Ovary (tissue), 10 donors: ENCODE measurements at regions of chr4 and their contacts with region 1.

Region 1: DNA sequence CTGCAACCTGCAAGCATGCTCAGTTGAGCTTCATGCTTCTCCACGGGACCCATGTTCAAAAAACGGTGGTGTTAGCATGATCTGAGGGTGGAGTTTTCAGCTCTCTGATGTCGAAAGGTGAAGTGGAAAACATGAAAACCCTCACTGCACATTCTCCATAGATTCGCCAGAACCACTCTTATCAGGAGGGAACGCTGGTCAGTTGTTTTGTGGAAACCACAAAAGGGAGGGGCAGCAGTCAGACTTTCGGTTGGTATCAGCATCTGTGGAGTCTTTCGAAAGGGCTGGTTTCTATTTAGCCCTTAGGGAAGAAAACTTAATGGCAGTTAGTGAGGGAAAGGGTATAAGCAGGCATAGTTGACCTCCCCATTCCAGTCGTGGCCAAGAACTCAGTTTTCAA is 12.6 kb downstream of the PPA2 start:
- DNase-seq: no peak
- H3K4me3 ChIP-seq: no peak overlapping the region
- H3K27ac ChIP-seq: no peak overlapping the region
- H3K4me1 ChIP-seq: no peaks in the 10 kb centered on the region
- H3K27me3 ChIP-seq: no peaks in the 10 kb centered on the region
- CTCF ChIP-seq: no peak
- EP300 ChIP-seq: no peak
- POLR2A ChIP-seq: no peak

Region 2: GRCh38 chr4:105246712-105247111 is 214.5 kb before region 1 on chr4:
- intact Hi-C with region 1: loop called in 1 of 4 experiments (anchors 10 kb)
- DNase-seq: no peak
- H3K4me3 ChIP-seq: no peak overlapping the region
- H3K27ac ChIP-seq: no peak overlapping the region
- H3K4me1 ChIP-seq: no peaks in the 10 kb centered on the region
- H3K27me3 ChIP-seq: no peaks in the 10 kb centered on the region
- CTCF ChIP-seq: no peak
- EP300 ChIP-seq: no peak
- POLR2A ChIP-seq: no peak

Region 3: GRCh38 chr4:106522839-106523238 is 1061.6 kb after region 1 on chr4:
- intact Hi-C with region 1: no loop called
- DNase-seq: no peak
- H3K4me3 ChIP-seq: no peak overlapping the region
- H3K27ac ChIP-seq: no peak overlapping the region
- H3K4me1 ChIP-seq: no peaks in the 10 kb centered on the region
- H3K27me3 ChIP-seq: no peaks in the 10 kb centered on the region
- CTCF ChIP-seq: no peak
- EP300 ChIP-seq: no peak
- POLR2A ChIP-seq: no peak